HepG2 (cell line): ENCODE measurements at regions of chr4 and their contacts with region 1.

Region 1: GRCh38 chr4:1346781-1347409 is at the start of gene UVSSA:
- DNase-seq: peak; percentile 97
- ATAC-seq: peak; percentile 89
- H3K4me3 ChIP-seq: peak within 1 kb of the TSS; percentile 82 to 94 (median 85)
- H3K27ac ChIP-seq: peak within 1 kb of the TSS; percentile 82
- H3K4me1 ChIP-seq: peaks cover 31% of the 10 kb centered on the region
- H3K27me3 ChIP-seq: no peaks in the 10 kb centered on the region; a peak in 1 of 5 replicates
- CTCF ChIP-seq: 0 out of 2 replicates have a peak, but pooled peaks have one; percentile 1
- EP300 ChIP-seq: 0 out of 4 replicates have a peak, but pooled peaks of 1 of the 2 experiments have one; percentile 5
- POLR2A ChIP-seq: no peak
- RAD21 ChIP-seq: no peak
- total RNA-seq, gene UVSSA: 4.6 and 4.8 TPM in 2 replicates

Region 2: DNA sequence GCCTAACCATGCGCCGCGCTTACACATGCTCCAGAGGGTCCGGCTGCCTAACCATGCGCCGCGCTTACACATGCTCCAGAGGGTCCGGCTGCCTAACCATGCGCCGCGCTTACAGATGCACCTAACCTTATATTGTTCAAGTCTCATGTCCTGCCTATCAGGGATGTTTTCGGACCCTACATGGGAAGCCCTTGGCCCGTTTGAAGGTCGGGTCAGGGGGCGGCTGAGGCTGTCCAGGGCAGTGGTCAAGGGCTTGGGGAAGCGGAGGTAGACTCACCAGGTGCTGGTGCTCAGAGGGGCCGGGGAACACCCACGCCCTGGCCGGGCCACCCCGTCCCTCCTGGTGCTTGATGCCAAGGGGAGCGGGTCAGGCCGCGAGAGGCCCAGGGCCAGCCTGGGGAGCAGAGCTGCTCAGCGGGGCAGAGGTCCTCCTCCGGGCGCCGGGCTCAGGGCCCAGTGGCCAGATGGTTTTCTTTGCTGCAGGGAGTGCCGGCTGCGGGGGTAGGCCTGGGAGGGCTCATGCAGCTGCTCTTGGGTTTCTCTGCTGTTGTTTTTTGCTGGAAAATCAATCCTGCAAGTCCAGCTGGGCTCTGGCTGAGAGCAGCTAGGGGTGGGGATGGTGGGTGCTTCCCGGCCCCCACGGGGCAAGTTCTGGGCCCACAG is 139.2 kb before region 1 on chr4:
- CTCF ChIA-PET with region 1: no interaction called
- POLR2A ChIA-PET with region 1: interaction called, 14 read pairs
- in situ Hi-C with region 1: no loop called
- intact Hi-C with region 1: no loop called
- DNase-seq: no peak
- ATAC-seq: peak; percentile 10
- H3K4me3 ChIP-seq: no peak overlapping the region
- H3K27ac ChIP-seq: no peak overlapping the region
- H3K4me1 ChIP-seq: peaks cover 45% of the 10 kb centered on the region
- H3K27me3 ChIP-seq: no peaks in the 10 kb centered on the region
- CTCF ChIP-seq: no peak
- EP300 ChIP-seq: no peak
- POLR2A ChIP-seq: no peak
- RAD21 ChIP-seq: no peak

Region 3: DNA sequence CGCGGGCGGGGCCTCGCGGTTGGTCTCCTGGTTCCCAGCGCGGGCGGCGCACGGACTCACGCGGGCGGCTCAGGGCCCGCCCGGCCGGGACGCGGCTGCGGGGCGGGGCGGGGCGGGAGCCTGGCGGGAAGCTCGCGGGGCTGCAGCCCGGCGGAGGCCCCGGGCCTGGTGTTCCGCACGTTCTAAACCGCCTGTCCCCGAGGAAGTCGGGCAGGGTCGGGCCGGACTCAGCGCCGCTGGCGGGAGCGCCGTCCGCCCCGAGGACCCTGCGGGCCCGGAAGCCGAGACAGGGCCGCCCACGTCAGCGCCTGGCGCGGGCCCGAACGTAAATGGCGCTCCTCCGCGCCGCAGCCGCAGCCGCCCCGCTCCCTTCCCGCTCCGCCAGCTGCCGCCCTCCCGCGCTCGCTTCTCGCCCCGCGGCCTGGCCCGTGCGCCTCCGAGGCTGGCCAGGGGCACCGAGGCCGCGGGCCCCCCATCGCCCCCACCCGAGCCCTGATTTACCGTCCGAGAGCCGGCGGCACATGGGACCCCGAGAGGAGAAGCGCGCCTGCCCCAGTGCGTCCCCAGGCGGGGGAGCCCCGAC is 97.7 kb before region 1 on chr4:
- CTCF ChIA-PET with region 1: no interaction called
- POLR2A ChIA-PET with region 1: interaction called, 43 read pairs
- in situ Hi-C with region 1: loop called (anchors 5 kb)
- intact Hi-C with region 1: loop called (anchors 1 kb)
- DNase-seq: peak; percentile 56
- ATAC-seq: peak; percentile 47
- H3K4me3 ChIP-seq: peak overlapping the region; percentile 68 to 78 (median 76)
- H3K27ac ChIP-seq: peak overlapping the region; percentile 84
- H3K4me1 ChIP-seq: peaks cover 64% of the 10 kb centered on the region
- H3K27me3 ChIP-seq: no peaks in the 10 kb centered on the region
- CTCF ChIP-seq: peak; percentile 9; the same call in 1 of the 2 replicates
- EP300 ChIP-seq: no peak
- POLR2A ChIP-seq: peak in 1 of 2 experiments; percentile 54; a peak in 2 of 4 replicates
- RAD21 ChIP-seq: peak; percentile 46; the same call in 1 of the 2 replicates

Region 4: DNA sequence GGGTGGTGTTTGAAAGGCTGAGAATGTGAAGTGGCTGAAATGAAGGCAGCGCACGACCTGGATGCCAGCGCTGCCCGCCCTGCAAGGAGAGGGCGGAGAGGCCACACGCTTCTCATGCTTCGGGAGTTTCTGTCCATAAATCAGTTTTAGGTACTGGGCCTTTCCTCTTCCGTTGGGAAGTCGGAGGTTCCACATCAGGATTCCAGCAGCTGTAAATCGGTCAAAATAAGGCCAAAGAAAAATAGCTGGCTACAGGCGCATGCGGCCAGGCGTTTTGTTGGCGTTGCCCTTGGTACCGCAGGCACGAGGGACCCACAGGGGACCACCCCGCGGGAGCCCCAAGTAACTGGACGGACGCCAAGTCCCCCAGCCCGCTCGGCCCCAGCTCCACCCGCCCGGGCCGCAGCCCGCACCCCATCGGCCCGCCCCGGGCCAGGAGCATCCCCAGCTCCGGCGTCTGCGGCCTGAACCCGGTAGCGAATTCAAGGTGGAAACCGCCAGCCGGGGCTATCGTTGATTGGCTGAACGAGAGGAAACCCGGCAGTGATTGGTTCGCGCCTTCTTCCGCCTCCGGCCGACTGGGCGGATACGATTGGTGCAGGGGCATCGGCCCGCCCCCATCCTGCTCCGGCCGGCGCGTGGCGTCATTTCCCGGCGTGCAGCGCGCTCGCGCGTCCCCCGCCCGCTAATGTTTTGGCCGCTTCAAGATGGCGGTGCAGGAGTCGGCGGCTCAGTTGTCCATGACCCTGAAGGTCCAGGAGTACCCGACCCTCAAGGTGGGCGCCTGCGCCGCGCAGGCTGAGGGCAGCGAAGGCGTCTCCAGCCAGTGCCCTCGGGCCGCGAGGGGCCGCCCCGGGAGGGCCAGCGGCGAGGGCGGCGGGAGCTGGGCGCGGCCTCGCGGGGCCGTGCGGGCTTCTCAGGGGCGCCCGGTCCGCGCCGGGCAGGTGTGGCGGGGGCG is 57.4 kb before region 1 on chr4 and contains the start of gene MAEA:
- CTCF ChIA-PET with region 1: no interaction called
- POLR2A ChIA-PET with region 1: interaction called, 33 read pairs
- in situ Hi-C with region 1: no loop called
- intact Hi-C with region 1: loop called (anchors 2 kb)
- DNase-seq: peak; percentile 92
- ATAC-seq: peak; percentile 90
- H3K4me3 ChIP-seq: peak within 1 kb of the TSS; percentile 81 to 94 (median 84)
- H3K27ac ChIP-seq: peak within 1 kb of the TSS; percentile 72
- H3K4me1 ChIP-seq: peaks cover 50% of the 10 kb centered on the region
- H3K27me3 ChIP-seq: no peaks in the 10 kb centered on the region; a peak in 1 of 5 replicates
- CTCF ChIP-seq: no peak
- EP300 ChIP-seq: 0 out of 4 replicates have a peak, but pooled peaks of 1 of the 2 experiments have one; percentile 16
- POLR2A ChIP-seq: peak; percentile 69 to 76
- RAD21 ChIP-seq: no peak
- total RNA-seq, gene MAEA: 52.0 and 65.2 TPM in 2 replicates

Region 5: GRCh38 chr4:1309261-1310010 is 37.5 kb before region 1 on chr4:
- CTCF ChIA-PET with region 1: no interaction called
- POLR2A ChIA-PET with region 1: interaction called, 26 read pairs
- in situ Hi-C with region 1: no loop called
- intact Hi-C with region 1: loop called (anchors 5 kb)
- DNase-seq: peak; percentile 91
- ATAC-seq: peak; percentile 95
- H3K4me3 ChIP-seq: peak overlapping the region; percentile 57 to 78 (median 73); a peak in 5 of 6 replicates
- H3K27ac ChIP-seq: peak overlapping the region; percentile 75
- H3K4me1 ChIP-seq: peaks cover 72% of the 10 kb centered on the region
- H3K27me3 ChIP-seq: no peaks in the 10 kb centered on the region
- CTCF ChIP-seq: no peak
- EP300 ChIP-seq: no peak
- POLR2A ChIP-seq: peak in 1 of 2 experiments; percentile 33; a peak in 1 of 4 replicates
- RAD21 ChIP-seq: peak; percentile 36; the same call in 1 of the 2 replicates

Region 6: DNA sequence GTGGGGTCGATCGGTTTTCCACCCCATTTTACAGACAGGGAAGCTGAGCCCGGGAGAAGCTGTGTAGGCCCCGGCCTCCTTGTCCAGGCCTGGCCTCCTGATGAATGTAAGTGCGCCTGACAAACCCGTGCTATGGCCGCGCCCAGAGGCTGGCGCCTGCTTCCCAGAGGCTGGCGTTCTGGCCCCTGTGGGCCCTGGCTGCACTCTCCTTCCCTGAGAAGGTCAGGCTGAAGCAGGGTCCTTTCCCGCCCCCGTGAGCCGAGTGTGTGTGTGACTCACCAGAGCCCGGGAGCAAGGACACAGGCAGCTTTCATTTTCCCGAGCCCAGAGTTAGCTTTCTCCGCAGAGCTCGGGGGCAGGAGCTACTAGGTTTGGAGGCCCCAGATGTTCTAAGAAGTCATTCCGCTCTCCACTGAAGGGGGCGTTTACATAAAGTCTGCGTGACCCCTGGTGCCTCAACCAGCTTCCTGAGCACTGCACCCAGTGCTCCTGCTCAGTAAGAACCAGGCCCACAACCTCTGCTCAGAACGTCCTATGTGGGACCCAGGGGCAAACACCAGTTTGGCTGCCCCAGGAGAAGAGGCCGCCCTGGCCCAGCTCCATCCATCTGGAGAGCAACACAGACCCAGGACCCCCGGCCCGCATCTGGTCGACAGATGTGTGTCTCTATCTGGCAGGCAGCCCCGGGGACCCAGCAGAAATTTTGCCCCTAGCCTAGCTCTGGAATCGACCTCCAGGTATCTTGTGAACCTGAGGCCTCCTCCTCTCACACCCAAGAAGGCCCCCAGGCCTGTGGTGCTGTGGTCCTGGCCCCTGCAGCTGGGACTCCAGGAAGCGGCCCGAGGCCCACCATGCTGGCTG is 13.8 kb after region 1 on chr4:
- CTCF ChIA-PET with region 1: no interaction called
- POLR2A ChIA-PET with region 1: interaction called, 10 read pairs
- in situ Hi-C with region 1: no loop called
- intact Hi-C with region 1: no loop called
- DNase-seq: peak; percentile 68
- ATAC-seq: peak; percentile 84
- H3K4me3 ChIP-seq: no peak overlapping the region
- H3K27ac ChIP-seq: peak overlapping the region; percentile 26
- H3K4me1 ChIP-seq: peaks cover 16% of the 10 kb centered on the region
- H3K27me3 ChIP-seq: no peaks in the 10 kb centered on the region
- CTCF ChIP-seq: peak; percentile 27
- EP300 ChIP-seq: no peak
- POLR2A ChIP-seq: no peak
- RAD21 ChIP-seq: no peak